ENCODE measurements at regions of chr12 and their contacts with region 1.

Region 1: DNA sequence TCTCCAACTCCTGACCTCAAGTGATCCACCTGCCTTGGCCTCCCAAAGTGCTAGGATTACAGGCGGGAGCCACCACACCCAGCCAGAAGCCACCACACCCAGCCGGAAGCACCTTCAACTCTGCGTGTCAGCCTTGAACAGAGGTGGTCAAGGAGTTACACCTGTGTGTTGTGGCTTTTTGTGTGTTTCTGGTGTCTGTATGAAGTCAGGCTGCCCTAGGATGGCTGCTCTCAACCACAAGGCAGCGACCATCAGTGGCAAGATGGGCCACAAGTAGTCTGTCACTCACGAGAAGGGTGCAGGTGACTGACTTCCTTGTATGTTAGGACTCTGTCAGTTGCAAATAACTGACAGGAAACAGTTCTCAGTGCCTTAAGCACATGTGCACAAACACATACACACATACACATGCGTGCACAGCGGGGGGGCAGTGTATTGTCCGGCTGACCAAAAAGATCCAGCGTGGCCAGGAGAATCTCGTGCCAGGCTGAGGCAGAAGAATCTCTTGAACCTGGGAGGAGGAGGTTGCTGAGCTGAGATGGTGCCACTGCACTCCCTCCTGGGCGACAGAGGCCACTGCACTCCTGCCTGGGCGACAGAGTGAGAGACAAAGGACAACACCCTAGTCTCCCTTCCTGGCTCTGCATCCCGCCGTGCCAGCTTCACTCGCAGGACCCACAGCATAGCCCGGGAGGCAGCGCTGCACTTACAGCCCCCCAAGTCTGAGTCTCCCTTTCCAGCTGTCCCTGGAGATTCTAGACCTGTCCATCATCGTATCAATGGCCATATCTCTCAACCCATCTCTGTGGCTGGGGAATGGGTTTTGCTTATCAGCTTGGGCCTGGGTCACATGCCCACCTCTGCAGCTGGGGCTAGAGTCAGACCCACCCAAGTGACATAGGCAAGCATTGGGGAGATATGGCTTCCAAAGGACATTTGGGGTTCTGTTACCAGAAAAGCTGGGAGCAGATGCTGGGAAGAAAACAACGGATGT is 13.7 kb downstream of the P2RX4 start:
- DNase-seq: peak; percentile 82
- ATAC-seq: peak; percentile 60
- H3K4me3 Mint-ChIP-seq: peak overlapping the region; percentile 16
- H3K27ac Mint-ChIP-seq: peak overlapping the region; percentile 94
- H3K4me1 Mint-ChIP-seq: peaks cover 66% of the 10 kb centered on the region
- H3K27me3 Mint-ChIP-seq: no peaks in the 10 kb centered on the region

Region 2: DNA sequence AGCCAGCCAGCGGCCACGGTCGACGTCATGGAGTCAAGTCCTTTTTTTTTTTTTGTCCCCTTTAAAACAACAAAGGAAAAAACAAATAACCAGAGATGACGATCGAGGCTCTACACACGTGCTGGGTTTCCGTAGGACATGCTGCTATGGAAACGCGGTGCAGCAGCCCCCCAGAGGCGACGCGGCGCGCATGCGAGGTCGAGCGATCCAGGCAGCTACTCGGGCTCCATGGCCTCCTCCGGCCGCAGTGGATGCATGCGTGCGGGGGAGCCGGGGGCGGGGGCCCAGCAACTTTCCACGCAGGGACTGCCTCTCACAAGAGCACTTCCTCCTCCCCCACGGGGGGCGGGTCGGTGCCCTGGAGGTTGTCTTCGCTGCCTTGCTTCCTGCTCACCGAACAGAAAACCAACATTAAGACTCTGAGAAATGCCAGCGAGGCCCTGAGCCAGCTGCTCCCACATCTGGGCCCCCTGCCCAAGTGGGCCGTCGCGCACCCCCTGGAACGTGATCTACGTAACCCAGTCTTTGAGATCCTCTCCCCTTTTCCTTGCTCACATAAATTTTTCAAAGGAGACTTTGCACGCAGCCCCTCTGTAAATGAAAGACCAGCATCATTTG is 17.0 kb after region 1 on chr12:
- CTCF ChIA-PET with region 1: interaction called, 45 read pairs
- POLR2A ChIA-PET with region 1: interaction called, 8 read pairs
- DNase-seq: peak; percentile 89
- ATAC-seq: peak; percentile 90
- H3K4me3 Mint-ChIP-seq: peak overlapping the region; percentile 68
- H3K27ac Mint-ChIP-seq: peak overlapping the region; percentile 96
- H3K4me1 Mint-ChIP-seq: peaks cover 44% of the 10 kb centered on the region
- H3K27me3 Mint-ChIP-seq: no peaks in the 10 kb centered on the region

Measured in activated CD8-positive, alpha-beta T cell treated with anti-CD3 and anti-CD28 coated beads, Interleukin-2, amount 10 ng/mL, durations not matched to agents 7 days and 5 days (primary cell).